AG04450 (cell line): ENCODE measurements at regions of chr20 and their contacts with region 1.

Region 1: GRCh38 chr20:41095110-41095969 is 42.0 kb upstream of the PLCG1 start:
- DNase-seq: no peak
- H3K4me3 ChIP-seq: no peak overlapping the region
- H3K27ac ChIP-seq: no peak overlapping the region
- H3K27me3 ChIP-seq: no peaks in the 10 kb centered on the region
- CTCF ChIP-seq: peak; percentile 84

Region 2: GRCh38 chr20:40962730-40963504 is 132.4 kb before region 1 on chr20:
- CTCF ChIA-PET with region 1: interaction called, 89 read pairs
- POLR2A ChIA-PET with region 1: no interaction called
- DNase-seq: no peak
- H3K4me3 ChIP-seq: no peak overlapping the region
- H3K27ac ChIP-seq: no peak overlapping the region
- H3K27me3 ChIP-seq: no peaks in the 10 kb centered on the region
- CTCF ChIP-seq: peak; percentile 85

Region 3: GRCh38 chr20:40970201-40970600 is 125.1 kb before region 1 on chr20:
- CTCF ChIA-PET with region 1: interaction called, 89 read pairs
- POLR2A ChIA-PET with region 1: no interaction called
- DNase-seq: no peak
- H3K4me3 ChIP-seq: no peak overlapping the region
- H3K27ac ChIP-seq: no peak overlapping the region
- H3K27me3 ChIP-seq: no peaks in the 10 kb centered on the region
- CTCF ChIP-seq: peak; percentile 28; the same call in 1 of the 2 replicates

Region 4: GRCh38 chr20:40980106-40980827 is 115.1 kb before region 1 on chr20:
- CTCF ChIA-PET with region 1: interaction called, 10 read pairs
- POLR2A ChIA-PET with region 1: no interaction called
- DNase-seq: no peak
- H3K4me3 ChIP-seq: no peak overlapping the region
- H3K27ac ChIP-seq: no peak overlapping the region
- H3K27me3 ChIP-seq: no peaks in the 10 kb centered on the region
- CTCF ChIP-seq: no peak

Region 5: DNA sequence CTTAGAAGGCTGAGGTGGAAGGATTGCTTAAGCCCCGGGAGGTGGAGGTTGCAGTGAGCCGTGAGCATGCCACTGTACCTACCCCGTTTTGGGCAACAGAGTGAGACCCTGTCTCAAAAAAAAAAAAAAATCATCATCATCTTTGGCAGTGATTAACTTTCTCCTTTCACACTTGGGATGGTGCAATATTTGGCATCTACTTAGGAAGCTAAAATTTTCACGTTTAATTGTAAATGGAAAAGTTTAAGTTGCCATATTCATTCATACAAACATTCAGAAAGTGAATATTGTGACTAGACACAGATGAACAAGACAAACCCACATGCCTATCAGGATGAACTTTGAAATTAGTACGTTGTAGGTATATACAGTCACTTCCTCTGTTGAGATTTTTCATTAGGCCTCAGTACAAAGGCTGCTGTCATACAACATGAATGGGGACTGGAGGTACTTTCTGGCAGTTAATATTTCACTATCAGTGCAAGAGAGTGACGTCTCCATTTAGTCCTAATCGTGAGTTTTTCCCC is 56.4 kb before region 1 on chr20:
- CTCF ChIA-PET with region 1: interaction called, 10 read pairs
- POLR2A ChIA-PET with region 1: no interaction called
- DNase-seq: no peak
- H3K4me3 ChIP-seq: no peak overlapping the region
- H3K27ac ChIP-seq: no peak overlapping the region
- H3K27me3 ChIP-seq: no peaks in the 10 kb centered on the region
- CTCF ChIP-seq: no peak